ENCODE measurements at regions of chr12 and their contacts with region 1.

Region 1: DNA sequence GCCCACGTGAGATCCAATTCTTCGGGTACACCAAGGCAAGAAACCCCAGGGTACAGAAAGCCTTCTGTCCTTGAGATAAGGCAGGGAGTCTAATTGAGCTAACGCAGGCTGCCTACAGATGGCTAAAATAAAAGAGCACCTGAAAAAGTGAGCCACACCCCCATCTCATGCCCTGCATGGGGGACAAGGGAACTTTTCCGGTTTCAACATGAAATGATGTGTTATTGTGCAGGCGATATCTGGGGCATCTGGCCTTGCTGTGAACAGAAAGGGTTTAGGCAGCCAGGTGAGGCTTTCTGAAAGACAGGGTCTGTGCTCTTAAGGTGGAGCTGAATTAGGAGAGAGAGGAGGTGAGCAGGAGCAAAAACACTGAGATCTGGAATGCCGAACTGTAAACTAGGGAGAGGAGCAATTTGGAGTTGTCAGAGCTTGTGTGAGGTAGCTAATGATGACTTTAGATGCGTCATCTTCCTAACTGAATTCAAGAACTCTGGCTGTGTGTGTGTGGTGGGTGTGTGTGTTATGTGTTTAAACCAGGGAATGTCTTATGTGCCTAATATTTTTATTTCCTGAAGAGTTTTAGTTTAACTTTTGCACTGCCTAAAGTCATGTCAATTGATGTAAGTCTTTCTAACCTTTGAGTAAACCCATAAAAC is 20.1 kb upstream of the LDHB start:
- DNase-seq: no peak
- H3K4me3 ChIP-seq: no peak overlapping the region
- H3K27ac ChIP-seq: no peak overlapping the region
- H3K4me1 ChIP-seq: no peaks in the 10 kb centered on the region
- H3K27me3 ChIP-seq: peaks cover 17% of the 10 kb centered on the region; the same call in 1 of the 2 replicates
- CTCF ChIP-seq: no peak
- EP300 ChIP-seq: no peak
- RAD21 ChIP-seq: no peak

Region 2: GRCh38 chr12:21248679-21249078 is 429.1 kb before region 1 on chr12:
- CTCF ChIA-PET with region 1: interaction called, 12 read pairs
- POLR2A ChIA-PET with region 1: no interaction called
- DNase-seq: peak; percentile 1
- H3K4me3 ChIP-seq: no peak overlapping the region
- H3K27ac ChIP-seq: no peak overlapping the region
- H3K4me1 ChIP-seq: no peaks in the 10 kb centered on the region
- H3K27me3 ChIP-seq: no peaks in the 10 kb centered on the region
- CTCF ChIP-seq: peak; percentile 51
- EP300 ChIP-seq: no peak
- RAD21 ChIP-seq: peak; percentile 38; the same call in 1 of the 2 replicates

Region 3: GRCh38 chr12:21607701-21608100 is 70.0 kb before region 1 on chr12:
- CTCF ChIA-PET with region 1: interaction called, 16 read pairs
- POLR2A ChIA-PET with region 1: interaction called, 3 read pairs
- DNase-seq: no peak
- H3K4me3 ChIP-seq: no peak overlapping the region
- H3K27ac ChIP-seq: no peak overlapping the region
- H3K4me1 ChIP-seq: no peaks in the 10 kb centered on the region
- H3K27me3 ChIP-seq: no peaks in the 10 kb centered on the region; the same call in 1 of the 2 replicates
- CTCF ChIP-seq: peak; percentile 45
- EP300 ChIP-seq: no peak
- RAD21 ChIP-seq: peak; percentile 57

Region 4: DNA sequence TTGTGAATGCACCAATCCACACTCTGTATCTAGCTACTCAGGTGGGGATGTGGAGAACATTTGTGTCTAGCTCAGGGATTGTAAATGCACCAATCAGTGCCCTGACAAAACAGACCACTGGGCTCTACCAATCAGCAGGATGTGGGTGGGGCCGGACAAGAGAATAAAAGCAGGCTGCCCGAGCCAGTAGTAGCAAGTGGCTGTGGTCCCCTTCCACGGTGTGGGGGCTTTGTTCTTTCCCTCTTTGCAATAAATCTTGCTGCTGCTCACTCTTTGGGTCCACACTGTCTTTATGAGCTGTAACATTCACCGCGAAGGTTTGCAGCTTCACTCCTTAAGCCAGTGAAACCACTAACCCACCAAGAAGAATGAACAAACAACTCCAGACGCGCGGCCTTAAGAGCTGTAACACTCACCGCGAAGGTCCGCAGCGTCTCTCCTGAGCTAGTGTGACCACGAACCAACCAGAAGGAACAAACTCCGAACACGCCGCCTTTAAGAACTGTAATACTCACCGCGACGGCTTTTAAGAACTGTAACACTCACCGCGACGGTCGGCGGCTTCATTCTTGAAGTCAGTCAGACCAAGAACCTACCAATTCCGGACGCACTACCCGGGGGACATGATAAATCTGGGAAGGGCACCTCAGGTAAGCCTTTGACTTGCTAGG is 15.5 kb before region 1 on chr12:
- CTCF ChIA-PET with region 1: interaction called, 14 read pairs
- POLR2A ChIA-PET with region 1: no interaction called
- DNase-seq: no peak
- H3K4me3 ChIP-seq: no peak overlapping the region
- H3K27ac ChIP-seq: no peak overlapping the region
- H3K4me1 ChIP-seq: no peaks in the 10 kb centered on the region
- H3K27me3 ChIP-seq: peaks cover 6% of the 10 kb centered on the region; the same call in 1 of the 2 replicates
- CTCF ChIP-seq: no peak
- EP300 ChIP-seq: no peak
- RAD21 ChIP-seq: no peak

Measured in SK-N-SH (cell line).